CD4-positive, alpha-beta memory T cell (primary cell): ENCODE measurements at regions of chr18 and their contacts with region 1.

Region 1: GRCh38 chr18:2994603-2995432 is 18.1 kb downstream of the LPIN2 start:
- DNase-seq: peak; percentile 75 to 84 (median 79)
- H3K4me3 ChIP-seq: peak overlapping the region in 1 of 2 donors; percentile 29
- H3K4me3 Mint-ChIP-seq: peak overlapping the region; percentile 53 to 81 (median 68)
- H3K27ac ChIP-seq: peak overlapping the region; percentile 28
- H3K27ac Mint-ChIP-seq: peak overlapping the region; percentile 61 to 94 (median 90)
- H3K4me1 ChIP-seq: peaks cover 62% of the 10 kb centered on the region
- H3K4me1 Mint-ChIP-seq: peaks cover 57 to 87% (median 73%) of the 10 kb centered on the region in 4 donors
- H3K27me3 ChIP-seq: no peaks in the 10 kb centered on the region
- H3K27me3 Mint-ChIP-seq: no peaks in the 10 kb centered on the region

Region 2: DNA sequence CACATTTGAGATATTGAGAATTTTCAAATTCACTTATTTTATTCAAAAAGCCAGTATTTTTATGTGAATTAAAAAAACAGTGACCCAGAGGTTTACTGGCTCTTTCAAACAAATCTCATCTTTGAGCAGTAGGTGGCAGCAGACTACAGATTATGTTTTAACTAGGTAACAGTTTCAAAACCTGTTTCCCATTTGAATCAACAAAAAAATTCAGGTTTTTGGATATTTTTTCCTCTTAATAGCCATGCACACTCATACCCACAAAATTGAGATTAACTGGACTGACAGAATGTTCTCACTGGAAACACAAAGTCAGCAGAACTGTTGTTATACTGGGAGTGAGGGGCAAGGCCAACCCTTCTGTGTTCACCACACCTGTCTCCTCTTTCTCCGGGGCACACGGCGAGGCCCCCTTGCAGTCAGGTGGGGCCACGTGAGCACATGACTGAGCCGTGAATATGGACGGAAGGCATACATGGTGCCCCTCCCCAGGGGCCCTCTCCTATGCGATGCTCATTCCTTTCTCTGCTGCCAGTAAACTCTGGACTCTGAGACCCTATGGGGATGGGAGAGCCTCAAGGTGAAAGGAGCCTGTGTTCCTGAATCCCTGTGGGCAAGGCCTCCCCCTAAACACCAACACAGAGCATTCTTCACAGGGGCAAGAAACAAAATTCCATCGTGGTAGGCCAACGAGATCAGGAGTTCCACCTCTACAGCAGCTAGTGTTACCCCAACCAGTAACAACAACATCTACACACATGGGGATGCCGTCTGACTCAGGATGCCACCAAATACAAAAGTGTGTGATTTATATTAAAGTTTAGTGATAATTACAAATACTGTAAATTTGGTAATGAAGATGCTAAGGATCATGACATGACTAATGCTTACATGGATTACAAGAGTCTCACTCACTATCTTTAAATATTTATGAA is 62.3 kb before region 1 on chr18:
- CTCF ChIA-PET with region 1: interaction called, 263 read pairs
- POLR2A ChIA-PET with region 1: interaction called, 8 read pairs
- intact Hi-C with region 1: no loop called
- DNase-seq: peak; percentile 59 to 79 (median 73)
- H3K4me3 ChIP-seq: no peak overlapping the region
- H3K4me3 Mint-ChIP-seq: peak overlapping the region in 6 of 8 donors; percentile 18 to 64 (median 44)
- H3K27ac ChIP-seq: peak overlapping the region; percentile 56
- H3K27ac Mint-ChIP-seq: peak overlapping the region; percentile 83 to 94 (median 89)
- H3K4me1 ChIP-seq: peaks cover 36% of the 10 kb centered on the region
- H3K4me1 Mint-ChIP-seq: peaks cover 29 to 43% (median 37%) of the 10 kb centered on the region in 4 donors
- H3K27me3 ChIP-seq: no peaks in the 10 kb centered on the region
- H3K27me3 Mint-ChIP-seq: no peaks in the 10 kb centered on the region

Region 3: DNA sequence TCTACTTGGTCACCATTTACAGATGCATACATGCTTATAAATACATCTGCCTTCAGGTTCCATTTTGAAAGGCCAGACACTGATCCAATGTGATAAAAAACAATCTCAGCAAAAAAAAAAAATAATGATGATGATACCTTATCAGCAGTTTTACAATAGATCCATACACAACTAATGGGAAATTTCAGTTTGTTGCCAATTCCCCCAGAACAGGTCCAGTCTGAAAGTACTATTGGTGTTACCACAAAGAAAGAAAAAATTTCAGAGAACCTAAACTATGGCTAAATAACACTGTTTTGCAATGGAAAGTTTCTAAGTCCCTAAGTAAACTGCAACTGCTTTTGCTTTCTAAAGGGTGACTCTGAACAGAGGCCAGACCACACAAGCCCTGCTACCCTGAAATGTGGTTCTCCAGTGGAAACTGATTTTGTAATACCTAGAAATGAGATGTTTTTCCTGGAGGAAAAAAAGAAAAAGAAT is 36.0 kb before region 1 on chr18:
- CTCF ChIA-PET with region 1: interaction called, 304 read pairs
- POLR2A ChIA-PET with region 1: interaction called, 1,352 read pairs
- intact Hi-C with region 1: no loop called
- DNase-seq: peak in 2 of 5 donors; percentile 37 to 64
- H3K4me3 ChIP-seq: peak overlapping the region in 1 of 2 donors; percentile 9
- H3K4me3 Mint-ChIP-seq: peak overlapping the region; percentile 4 to 89 (median 73)
- H3K27ac ChIP-seq: peak overlapping the region; percentile 79
- H3K27ac Mint-ChIP-seq: peak overlapping the region; percentile 88 to 99 (median 98)
- H3K4me1 ChIP-seq: peaks cover 95% of the 10 kb centered on the region
- H3K4me1 Mint-ChIP-seq: peaks cover 68 to 97% (median 85%) of the 10 kb centered on the region in 4 donors
- H3K27me3 ChIP-seq: no peaks in the 10 kb centered on the region
- H3K27me3 Mint-ChIP-seq: no peaks in the 10 kb centered on the region

Region 4: DNA sequence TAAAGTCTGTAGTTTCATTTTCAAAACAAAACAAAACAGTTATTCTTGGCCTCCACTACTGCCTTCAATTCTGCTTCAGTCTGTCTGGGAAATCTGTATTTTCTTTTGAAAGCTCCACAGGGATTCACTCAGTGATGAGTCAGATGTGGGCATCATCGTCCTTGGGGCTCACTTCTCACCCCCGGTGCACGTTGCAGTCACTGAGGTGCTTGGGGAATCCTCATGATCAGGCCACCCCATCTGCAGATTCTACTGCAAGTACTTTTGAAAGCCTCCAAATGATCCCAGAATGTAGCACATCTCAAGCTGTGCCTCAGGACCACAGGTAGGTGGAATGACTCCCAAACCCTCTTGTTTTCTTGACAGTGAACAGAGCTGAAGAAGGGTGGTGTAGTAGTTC is 16.2 kb before region 1 on chr18:
- CTCF ChIA-PET with region 1: interaction called, 304 read pairs
- POLR2A ChIA-PET with region 1: interaction called, 1,352 read pairs
- intact Hi-C with region 1: no loop called
- DNase-seq: peak in 1 of 5 donors; percentile 74
- H3K4me3 ChIP-seq: peak overlapping the region; percentile 8 to 31
- H3K4me3 Mint-ChIP-seq: peak overlapping the region; percentile 75 to 96 (median 90)
- H3K27ac ChIP-seq: peak overlapping the region; percentile 72
- H3K27ac Mint-ChIP-seq: peak overlapping the region; percentile 89 to 96 (median 93)
- H3K4me1 ChIP-seq: peaks cover 90% of the 10 kb centered on the region
- H3K4me1 Mint-ChIP-seq: peaks cover 55 to 93% (median 68%) of the 10 kb centered on the region in 4 donors
- H3K27me3 ChIP-seq: no peaks in the 10 kb centered on the region
- H3K27me3 Mint-ChIP-seq: no peaks in the 10 kb centered on the region

Region 5: DNA sequence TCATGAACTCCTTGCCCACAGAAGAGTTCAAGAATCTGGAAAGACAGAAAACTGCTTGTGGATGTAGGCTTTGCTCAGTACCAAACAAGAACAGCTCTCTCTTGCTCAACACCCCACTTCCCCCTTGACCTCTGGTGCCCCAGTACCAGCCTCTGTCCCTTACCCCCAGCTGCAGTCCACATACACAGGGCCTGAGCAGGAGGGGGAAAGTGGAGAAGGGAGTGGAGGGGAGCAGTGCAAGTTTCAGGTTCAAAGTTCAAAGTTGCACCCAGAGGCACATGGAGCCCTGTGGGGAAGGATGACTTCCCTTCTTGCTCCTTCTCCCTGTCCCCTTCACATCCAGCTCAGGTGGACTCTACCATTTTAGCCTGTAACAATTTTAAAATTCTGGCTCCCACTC is 79.3 kb after region 1 on chr18:
- CTCF ChIA-PET with region 1: interaction called, 31 read pairs
- POLR2A ChIA-PET with region 1: no interaction called
- intact Hi-C with region 1: no loop called
- DNase-seq: no peak
- H3K4me3 ChIP-seq: no peak overlapping the region
- H3K4me3 Mint-ChIP-seq: no peak overlapping the region
- H3K27ac ChIP-seq: no peak overlapping the region
- H3K27ac Mint-ChIP-seq: peak overlapping the region in 1 of 7 donors; percentile 22
- H3K4me1 ChIP-seq: peaks cover 9% of the 10 kb centered on the region
- H3K4me1 Mint-ChIP-seq: peaks cover 7 to 11% (median 9%) of the 10 kb centered on the region in 4 donors
- H3K27me3 ChIP-seq: no peaks in the 10 kb centered on the region
- H3K27me3 Mint-ChIP-seq: no peaks in the 10 kb centered on the region

Region 6: GRCh38 chr18:3119401-3120335 is 124.8 kb after region 1 on chr18:
- CTCF ChIA-PET with region 1: interaction called, 291 read pairs
- POLR2A ChIA-PET with region 1: interaction called, 4 read pairs
- intact Hi-C with region 1: no loop called
- DNase-seq: no peak
- H3K4me3 ChIP-seq: no peak overlapping the region
- H3K4me3 Mint-ChIP-seq: no peak overlapping the region
- H3K27ac ChIP-seq: no peak overlapping the region
- H3K27ac Mint-ChIP-seq: no peak overlapping the region
- H3K4me1 ChIP-seq: no peaks in the 10 kb centered on the region
- H3K4me1 Mint-ChIP-seq: no peaks in the 10 kb centered on the region
- H3K27me3 ChIP-seq: no peaks in the 10 kb centered on the region
- H3K27me3 Mint-ChIP-seq: no peaks in the 10 kb centered on the region